ENCODE measurements at regions of chr2 and their contacts with region 1.

Region 1: DNA sequence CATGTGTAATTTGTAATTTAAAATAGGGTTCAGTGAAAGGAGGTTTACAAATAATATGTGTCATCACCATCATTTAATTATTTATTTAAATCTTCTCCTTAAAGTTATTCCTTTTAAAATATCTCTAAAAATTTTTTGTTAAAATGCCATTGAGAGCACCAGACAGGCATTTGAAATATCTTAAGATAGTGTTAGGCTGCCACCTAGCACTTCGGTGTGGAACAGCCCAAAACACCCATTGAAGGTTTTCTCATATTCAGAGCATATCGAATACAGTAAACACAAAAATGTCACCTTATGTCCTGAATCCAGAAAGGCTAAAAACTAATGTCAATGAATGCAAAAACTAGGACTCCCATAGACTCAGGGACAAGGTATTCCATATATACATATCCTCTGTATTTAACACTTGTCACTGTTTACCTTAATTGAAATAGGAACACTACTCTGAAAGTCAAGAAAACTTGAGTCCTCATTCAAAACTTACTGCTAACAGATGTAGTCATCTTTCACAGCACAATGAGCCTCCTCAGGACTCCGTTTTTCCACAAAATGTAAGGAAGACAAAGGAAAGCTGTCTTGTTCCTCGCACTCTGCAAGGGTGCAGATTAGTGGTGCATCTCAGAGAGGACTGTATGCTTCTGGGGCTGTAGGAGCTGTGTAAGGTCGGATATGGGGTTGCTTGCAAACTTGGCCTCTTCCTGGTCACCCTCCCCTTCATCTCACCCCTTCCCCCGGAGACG is 329.5 kb downstream of the PAX3 start:
- DNase-seq: no peak

Region 2: GRCh38 chr2:220687231-220687843 is 1281.9 kb before region 1 on chr2:
- intact Hi-C with region 1: loop called in 1 of 2 experiments (anchors 10 kb)
- DNase-seq: peak; percentile 83

Region 3: DNA sequence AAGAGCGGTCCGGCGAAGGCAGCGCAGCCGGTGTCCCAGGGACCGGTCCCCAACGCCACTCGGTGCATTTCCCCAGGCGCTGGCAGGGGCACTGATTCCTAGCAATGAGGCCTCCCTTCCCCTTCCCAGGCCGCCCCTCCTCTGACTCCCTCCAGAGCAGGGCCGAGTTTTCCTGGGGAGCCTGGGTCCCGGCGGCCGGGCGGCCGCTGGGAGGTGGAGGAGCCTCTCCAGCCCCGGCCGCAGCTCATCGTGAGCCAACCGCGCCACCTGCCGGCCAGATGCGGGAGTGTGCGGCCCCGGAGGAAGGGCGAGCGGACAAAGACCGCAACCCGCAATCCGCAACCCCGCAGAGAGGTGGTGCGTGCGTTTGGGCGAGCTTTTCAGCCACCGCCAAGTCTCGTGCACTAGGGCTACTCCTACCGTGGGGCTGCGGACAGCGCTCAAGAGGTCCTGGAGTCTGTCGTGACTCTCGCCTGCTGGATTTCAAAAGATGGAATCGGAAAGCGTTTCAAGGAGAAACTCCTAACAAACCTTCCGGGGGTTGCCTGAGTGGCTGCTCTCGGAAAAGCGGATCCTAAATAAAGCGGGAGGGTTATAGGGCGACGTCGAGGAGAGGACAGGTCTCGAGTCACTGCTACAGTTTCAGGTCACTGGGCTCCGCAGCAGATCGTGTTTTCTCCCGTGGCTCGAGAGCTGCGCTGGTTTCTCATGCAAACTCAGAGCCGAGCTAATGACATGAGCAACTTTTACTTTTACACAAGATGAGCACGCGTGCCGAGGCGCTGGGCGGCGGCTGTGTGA is 395.6 kb before region 1 on chr2:
- intact Hi-C with region 1: loop called (anchors 10 kb)
- DNase-seq: peak; percentile 96